Ascending aorta (tissue), 2 donors: ENCODE measurements at regions of chr10 and their contacts with region 1.

Region 1: DNA sequence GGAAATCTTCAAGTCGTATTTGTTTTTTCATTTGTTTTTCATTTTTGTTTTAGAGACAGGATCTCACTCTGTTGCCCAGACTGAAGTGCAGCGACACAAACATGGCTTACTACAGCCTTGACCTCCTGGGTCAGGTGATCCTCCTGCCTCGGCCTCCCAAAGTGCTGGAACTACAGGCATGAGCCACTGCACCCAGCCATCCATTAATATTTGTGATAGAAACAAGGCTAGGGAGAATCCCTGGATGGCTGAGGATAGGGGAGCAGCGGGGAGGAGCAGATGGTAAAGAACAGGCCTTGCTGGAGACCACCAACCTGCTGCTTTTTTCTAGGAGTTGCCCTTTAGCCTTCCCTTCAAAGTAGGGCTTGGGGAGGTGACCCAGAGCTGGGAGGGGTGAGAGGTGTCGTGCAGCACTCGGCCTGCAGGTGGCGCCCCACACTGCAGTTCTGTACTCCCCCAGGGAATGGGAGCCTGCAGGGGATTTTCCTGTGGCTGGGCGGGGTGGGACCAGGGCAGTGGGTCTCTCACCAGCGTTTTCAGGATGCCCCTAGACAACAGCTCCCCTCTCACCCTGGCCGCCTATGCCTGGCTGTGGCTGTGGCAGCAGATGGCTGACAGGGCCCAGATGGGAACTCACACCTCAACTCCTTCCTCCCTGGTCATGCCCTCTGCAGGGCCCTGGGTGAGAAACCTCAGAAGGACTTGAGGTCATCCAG is 12.6 kb upstream of the CDH23 start:
- DNase-seq: peak in 1 of 2 donors; percentile 79
- H3K4me3 ChIP-seq: no peak overlapping the region
- H3K27ac ChIP-seq: no peak overlapping the region
- H3K4me1 ChIP-seq: no peaks in the 10 kb centered on the region
- H3K27me3 ChIP-seq: no peaks in the 10 kb centered on the region
- CTCF ChIP-seq: peak; percentile 84 to 91 (median 90)

Region 2: DNA sequence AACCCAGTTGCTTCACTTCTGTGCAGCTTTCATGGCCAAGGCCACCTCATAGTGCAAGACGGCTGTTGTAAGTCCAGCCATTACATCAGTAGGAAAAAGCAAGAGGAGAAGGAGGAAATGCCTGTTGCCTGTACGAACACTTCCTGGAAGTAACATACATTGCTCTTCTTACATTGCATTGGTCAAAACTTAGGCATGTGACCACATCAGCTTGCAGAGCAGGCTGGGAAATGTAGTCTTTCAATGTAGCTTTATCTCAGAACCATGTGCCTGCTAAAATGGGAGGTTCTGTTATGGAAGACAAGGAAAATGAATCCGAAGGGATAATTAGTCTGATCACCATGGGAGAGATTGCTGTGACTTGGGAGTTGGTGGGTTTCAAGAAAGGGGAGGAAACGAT is 60.7 kb before region 1 on chr10:
- intact Hi-C with region 1: no loop called
- DNase-seq: no peak
- H3K4me3 ChIP-seq: no peak overlapping the region
- H3K27ac ChIP-seq: no peak overlapping the region
- H3K4me1 ChIP-seq: peaks cover 5 to 7% of the 10 kb centered on the region in 2 donors
- H3K27me3 ChIP-seq: no peaks in the 10 kb centered on the region
- CTCF ChIP-seq: no peak

Region 3: GRCh38 chr10:71486484-71487114 is 102.5 kb after region 1 on chr10:
- intact Hi-C with region 1: no loop called
- DNase-seq: no peak
- H3K4me3 ChIP-seq: no peak overlapping the region
- H3K27ac ChIP-seq: no peak overlapping the region
- H3K4me1 ChIP-seq: no peaks in the 10 kb centered on the region
- H3K27me3 ChIP-seq: no peaks in the 10 kb centered on the region
- CTCF ChIP-seq: peak in 1 of 3 experiments; percentile 11

Region 4: GRCh38 chr10:71708301-71708703 is 324.2 kb after region 1 on chr10:
- intact Hi-C with region 1: loop called (anchors 1 kb)
- DNase-seq: peak in 1 of 2 donors; percentile 74
- H3K4me3 ChIP-seq: no peak overlapping the region
- H3K27ac ChIP-seq: no peak overlapping the region
- H3K4me1 ChIP-seq: peaks cover 6 to 7% of the 10 kb centered on the region in 2 donors
- H3K27me3 ChIP-seq: no peaks in the 10 kb centered on the region
- CTCF ChIP-seq: peak; percentile 65 to 70 (median 69)